PC-3 (cell line): ENCODE measurements at regions of chr22 and their contacts with region 1.

Region 1: GRCh38 chr22:46070803-46071450 is 79.4 kb upstream of the PPARA start:
- DNase-seq: peak; percentile 70
- ATAC-seq: peak; percentile 12
- H3K4me3 ChIP-seq: peak overlapping the region; percentile 66
- H3K27ac ChIP-seq: peak overlapping the region; percentile 99
- H3K4me1 ChIP-seq: peaks cover 30% of the 10 kb centered on the region
- H3K27me3 ChIP-seq: no peaks in the 10 kb centered on the region
- CTCF ChIP-seq: no peak

Region 2: GRCh38 chr22:45112136-45112879 is 958.6 kb before region 1 on chr22:
- CTCF ChIA-PET with region 1: no interaction called
- POLR2A ChIA-PET with region 1: interaction called, 11 read pairs
- intact Hi-C with region 1: no loop called
- DNase-seq: peak; percentile 61
- ATAC-seq: peak; percentile 35
- H3K4me3 ChIP-seq: no peak overlapping the region
- H3K27ac ChIP-seq: no peak overlapping the region
- H3K4me1 ChIP-seq: no peaks in the 10 kb centered on the region
- H3K27me3 ChIP-seq: no peaks in the 10 kb centered on the region
- CTCF ChIP-seq: no peak

Region 3: DNA sequence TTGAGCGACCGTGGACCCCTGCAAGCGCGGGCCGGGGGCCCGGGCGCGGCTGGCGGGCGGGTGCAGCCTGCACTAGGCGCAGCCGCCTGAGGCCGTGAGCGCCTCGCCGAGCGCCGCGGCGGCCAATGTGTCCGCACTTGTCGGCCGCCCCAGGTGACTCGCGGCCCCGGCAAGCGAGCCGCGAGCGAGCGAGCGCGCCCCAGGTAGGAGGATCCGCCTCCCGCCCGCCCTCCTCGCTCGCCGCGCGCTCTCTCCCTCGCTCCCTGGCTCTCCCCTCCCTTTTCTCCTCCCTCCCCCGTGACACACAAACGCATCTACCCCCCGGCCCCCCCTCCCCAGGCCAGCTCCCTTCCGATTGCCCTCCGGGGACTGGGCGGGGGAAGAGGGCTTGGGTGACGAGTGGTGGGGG is 93.9 kb before region 1 on chr22 and contains the start of gene WNT7B:
- CTCF ChIA-PET with region 1: no interaction called
- POLR2A ChIA-PET with region 1: interaction called, 12 read pairs
- intact Hi-C with region 1: no loop called
- DNase-seq: peak; percentile 83
- ATAC-seq: peak; percentile 28
- H3K4me3 ChIP-seq: peak within 1 kb of the TSS; percentile 90
- H3K27ac ChIP-seq: peak within 1 kb of the TSS; percentile 13
- H3K4me1 ChIP-seq: peaks cover 27% of the 10 kb centered on the region
- H3K27me3 ChIP-seq: no peaks in the 10 kb centered on the region
- CTCF ChIP-seq: no peak
- total RNA-seq, gene WNT7B: 42.0 and 73.1 TPM in 2 replicates

Region 4: GRCh38 chr22:46006379-46007002 is 64.4 kb before region 1 on chr22:
- CTCF ChIA-PET with region 1: interaction called, 4 read pairs
- POLR2A ChIA-PET with region 1: no interaction called
- intact Hi-C with region 1: loop called (anchors 2 kb)
- DNase-seq: peak; percentile 85
- ATAC-seq: peak; percentile 63
- H3K4me3 ChIP-seq: peak overlapping the region; percentile 56
- H3K27ac ChIP-seq: peak overlapping the region; percentile 96
- H3K4me1 ChIP-seq: peaks cover 50% of the 10 kb centered on the region
- H3K27me3 ChIP-seq: no peaks in the 10 kb centered on the region
- CTCF ChIP-seq: peak; percentile 85

Region 5: DNA sequence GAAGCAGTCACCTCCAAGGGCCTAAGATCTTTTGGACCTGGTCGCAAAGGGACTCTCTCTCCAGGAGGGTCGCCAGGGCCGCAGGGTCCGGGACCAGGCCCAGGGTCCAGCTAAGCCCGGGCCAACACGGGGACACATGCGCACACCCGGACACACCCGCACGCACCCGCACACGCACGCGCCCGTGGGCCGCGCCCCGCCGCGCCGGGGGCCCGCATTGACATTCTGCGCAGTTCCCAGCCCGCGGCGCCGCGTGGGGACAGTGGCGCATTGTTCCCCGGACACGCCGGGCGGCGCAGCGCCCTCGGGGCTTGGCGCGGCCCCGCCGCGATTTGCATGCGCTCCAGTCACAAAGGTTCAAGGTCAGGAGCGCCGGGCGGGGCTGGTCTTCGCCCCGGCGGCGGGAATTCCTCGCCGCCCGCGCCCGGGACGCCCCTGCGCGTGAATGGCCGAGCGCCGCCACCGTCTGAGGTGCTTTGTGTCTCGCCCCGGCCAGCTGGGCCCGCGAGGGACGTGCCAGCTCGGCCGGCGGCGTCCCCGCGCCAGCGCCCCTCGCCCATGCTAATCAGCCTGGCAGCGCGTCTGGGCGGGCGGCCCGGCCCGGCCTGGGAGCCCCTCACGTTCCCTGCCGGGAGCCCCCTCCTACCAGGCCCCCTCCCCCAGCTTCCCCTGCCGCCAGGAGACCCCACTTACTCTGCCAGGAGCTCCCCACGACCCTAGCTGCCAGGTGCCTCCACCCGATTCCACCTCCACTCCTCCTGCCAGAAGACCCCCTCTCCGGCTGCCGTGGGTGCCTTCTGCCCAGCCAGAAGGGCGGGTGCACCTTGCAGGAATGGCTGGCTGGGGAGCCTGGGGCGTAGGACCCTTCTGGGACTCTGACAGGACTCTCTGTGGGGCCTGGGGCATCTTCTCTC is 43.5 kb before region 1 on chr22:
- CTCF ChIA-PET with region 1: no interaction called
- POLR2A ChIA-PET with region 1: no interaction called
- intact Hi-C with region 1: no loop called
- DNase-seq: no peak
- ATAC-seq: peak; percentile 60
- H3K4me3 ChIP-seq: peak overlapping the region; percentile 55
- H3K27ac ChIP-seq: no peak overlapping the region
- H3K4me1 ChIP-seq: peaks cover 13% of the 10 kb centered on the region
- H3K27me3 ChIP-seq: no peaks in the 10 kb centered on the region
- CTCF ChIP-seq: no peak

Region 6: DNA sequence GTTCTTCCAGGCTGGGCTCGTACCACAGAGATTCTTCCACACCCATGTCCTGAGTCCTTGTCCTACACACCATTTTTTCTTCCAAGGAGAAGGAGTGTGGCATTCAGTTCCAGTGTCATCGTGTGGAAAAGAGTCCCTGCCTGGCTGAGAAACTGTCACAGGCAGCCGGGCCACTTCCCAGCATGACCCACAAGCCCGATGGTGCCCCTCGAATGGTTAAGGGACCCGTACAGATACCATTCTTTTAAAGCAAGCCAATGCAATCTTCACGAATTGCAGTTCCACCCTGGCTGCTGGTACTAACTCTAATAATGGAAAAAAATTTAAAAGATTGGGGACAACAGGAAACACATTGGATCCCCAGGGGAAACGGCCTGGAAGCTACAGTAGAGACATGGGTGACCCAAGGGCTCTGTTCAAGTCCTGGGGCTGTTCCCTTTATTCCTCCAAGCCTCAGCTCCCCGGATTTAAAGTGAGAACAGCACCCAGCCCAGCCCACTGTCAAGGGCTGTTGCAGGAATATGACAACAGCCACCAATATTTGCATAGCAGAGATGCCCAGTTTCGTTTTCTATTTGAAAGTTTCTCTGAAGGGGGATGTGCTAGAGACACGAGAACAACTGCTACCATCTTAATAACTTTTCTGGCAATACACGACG is 13.0 kb before region 1 on chr22:
- CTCF ChIA-PET with region 1: no interaction called
- POLR2A ChIA-PET with region 1: interaction called, 3 read pairs
- intact Hi-C with region 1: loop called (anchors 1 kb)
- DNase-seq: peak; percentile 84
- ATAC-seq: peak; percentile 31
- H3K4me3 ChIP-seq: peak overlapping the region; percentile 74
- H3K27ac ChIP-seq: peak overlapping the region; percentile 96
- H3K4me1 ChIP-seq: peaks cover 65% of the 10 kb centered on the region
- H3K27me3 ChIP-seq: no peaks in the 10 kb centered on the region
- CTCF ChIP-seq: no peak

Region 7: DNA sequence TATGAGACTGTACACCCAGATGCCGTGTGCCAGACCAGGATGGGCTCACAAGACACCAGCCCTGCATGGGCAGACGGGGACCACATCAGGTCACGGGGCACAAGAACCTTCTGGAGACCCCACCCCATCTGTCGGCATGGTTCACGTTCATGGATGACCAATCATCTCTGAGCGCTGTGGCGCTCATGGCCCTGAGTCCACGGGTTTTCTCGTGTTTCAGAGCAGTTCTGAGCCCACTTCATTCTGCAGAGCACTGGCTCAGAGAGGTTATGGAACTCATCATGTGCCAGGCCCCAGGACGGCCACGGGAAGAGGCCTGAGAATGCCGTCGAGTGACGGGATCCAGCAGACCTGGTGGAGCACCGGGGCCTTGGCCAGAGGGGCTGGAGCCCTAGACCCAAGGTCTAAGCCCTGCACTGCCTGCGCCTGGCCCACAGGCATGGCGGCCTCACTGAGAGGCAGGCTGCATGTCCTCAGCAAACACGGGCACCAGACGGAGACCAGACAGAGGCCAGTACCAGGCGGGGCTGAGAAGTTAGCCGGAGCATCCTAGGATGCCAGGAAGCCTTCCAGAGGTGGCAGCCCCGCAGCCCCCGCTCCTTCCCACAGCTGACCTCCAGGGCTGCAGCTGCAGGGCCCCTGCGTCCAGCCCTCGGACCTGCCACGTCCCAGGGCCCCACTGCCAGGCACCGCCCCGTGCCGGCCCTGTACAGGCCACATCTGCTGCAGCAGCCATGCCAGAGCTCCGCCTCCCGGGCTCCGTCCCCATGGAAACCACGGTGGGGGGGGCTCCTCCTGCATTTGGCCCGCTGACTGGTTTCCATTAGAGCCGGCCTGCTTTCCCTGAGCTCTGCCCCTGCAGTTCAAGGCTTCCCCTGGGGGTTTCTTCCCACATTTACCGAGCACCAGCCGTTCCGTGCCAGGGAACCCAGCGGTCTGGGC is 16.7 kb after region 1 on chr22:
- CTCF ChIA-PET with region 1: no interaction called
- POLR2A ChIA-PET with region 1: interaction called, 30 read pairs
- intact Hi-C with region 1: no loop called
- DNase-seq: no peak
- ATAC-seq: peak; percentile 21
- H3K4me3 ChIP-seq: peak overlapping the region; percentile 94
- H3K27ac ChIP-seq: peak overlapping the region; percentile 99
- H3K4me1 ChIP-seq: peaks cover 68% of the 10 kb centered on the region
- H3K27me3 ChIP-seq: no peaks in the 10 kb centered on the region
- CTCF ChIP-seq: no peak

Region 8: DNA sequence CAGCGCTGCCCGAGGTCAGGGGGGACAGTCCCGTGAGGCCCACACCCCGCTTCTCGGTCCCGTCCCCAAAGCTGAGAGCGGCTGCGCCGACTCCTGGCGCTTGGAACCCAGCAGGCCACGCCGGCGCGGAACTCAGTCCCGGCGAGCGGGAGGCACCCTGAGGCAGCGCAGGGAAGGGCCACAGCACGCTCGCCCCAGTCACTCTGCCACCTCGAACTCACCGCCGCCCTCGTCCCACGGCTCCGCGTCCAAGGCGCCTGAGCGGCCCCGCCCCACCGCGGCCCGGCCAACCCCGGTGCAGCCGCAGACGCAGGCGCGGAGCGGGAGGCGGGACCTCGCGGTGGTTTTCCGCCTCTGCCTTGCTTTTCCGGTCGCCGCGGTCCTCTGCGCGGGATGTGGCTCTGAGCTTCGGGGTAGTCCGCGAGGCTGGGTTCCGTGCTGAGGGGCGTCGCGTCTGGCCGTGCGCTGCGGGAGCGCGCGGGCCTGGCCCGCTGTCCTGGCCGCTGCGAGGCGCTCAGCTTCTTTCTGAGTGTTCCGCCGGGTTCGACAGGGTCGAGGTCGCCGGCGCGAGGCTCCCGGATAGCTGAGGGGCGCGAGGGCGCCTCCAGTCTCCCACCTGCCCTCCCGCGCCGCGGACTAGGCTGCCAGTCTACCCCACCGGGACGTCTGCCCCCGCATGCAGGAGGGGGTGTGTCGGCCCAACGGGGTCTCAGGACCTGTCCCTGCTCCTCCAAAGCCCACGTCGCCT is 179.3 kb after region 1 on chr22 and contains the start of gene CDPF1:
- CTCF ChIA-PET with region 1: no interaction called
- POLR2A ChIA-PET with region 1: no interaction called
- intact Hi-C with region 1: no loop called
- DNase-seq: peak; percentile 82
- ATAC-seq: peak; percentile 97
- H3K4me3 ChIP-seq: peak within 1 kb of the TSS; percentile 90
- H3K27ac ChIP-seq: peak within 1 kb of the TSS; percentile 40
- H3K4me1 ChIP-seq: peaks cover 15% of the 10 kb centered on the region
- H3K27me3 ChIP-seq: no peaks in the 10 kb centered on the region
- CTCF ChIP-seq: no peak
- total RNA-seq, gene CDPF1: 14.1 and 21.0 TPM in 2 replicates